Endothelial cell of umbilical vein (primary cell): ENCODE measurements at regions of chr2 and their contacts with region 1.

Region 1: GRCh38 chr2:68594674-68595492 is 48.5 kb upstream of the PROKR1 start:
- DNase-seq: peak; percentile 63
- H3K4me3 ChIP-seq: no peak overlapping the region
- H3K27ac ChIP-seq: no peak overlapping the region
- H3K4me1 ChIP-seq: no peaks in the 10 kb centered on the region
- H3K27me3 ChIP-seq: peaks cover 0 to 4% of the 10 kb centered on the region in 2 experiments
- CTCF ChIP-seq: peak; percentile 75 to 77
- POLR2A ChIP-seq: no peak

Region 2: GRCh38 chr2:68499133-68499532 is 95.8 kb before region 1 on chr2:
- CTCF ChIA-PET with region 1: interaction called, 12 read pairs
- POLR2A ChIA-PET with region 1: no interaction called
- dilution Hi-C with region 1: no loop called
- intact Hi-C with region 1: no loop called
- DNase-seq: no peak
- H3K4me3 ChIP-seq: no peak overlapping the region
- H3K27ac ChIP-seq: no peak overlapping the region
- H3K4me1 ChIP-seq: no peaks in the 10 kb centered on the region
- H3K27me3 ChIP-seq: no peaks in the 10 kb centered on the region
- CTCF ChIP-seq: no peak
- POLR2A ChIP-seq: no peak

Region 3: GRCh38 chr2:68561372-68561771 is 33.5 kb before region 1 on chr2:
- CTCF ChIA-PET with region 1: interaction called, 13 read pairs
- POLR2A ChIA-PET with region 1: no interaction called
- dilution Hi-C with region 1: no loop called
- intact Hi-C with region 1: no loop called
- DNase-seq: peak; percentile 52
- H3K4me3 ChIP-seq: no peak overlapping the region
- H3K27ac ChIP-seq: no peak overlapping the region
- H3K4me1 ChIP-seq: peaks cover 17% of the 10 kb centered on the region
- H3K27me3 ChIP-seq: peaks cover 13 to 44% of the 10 kb centered on the region in 2 experiments
- CTCF ChIP-seq: no peak
- POLR2A ChIP-seq: no peak

Region 4: GRCh38 chr2:68646302-68646701 is 51.4 kb after region 1 on chr2:
- CTCF ChIA-PET with region 1: interaction called, 12 read pairs
- POLR2A ChIA-PET with region 1: no interaction called
- dilution Hi-C with region 1: no loop called
- intact Hi-C with region 1: no loop called
- DNase-seq: no peak
- H3K4me3 ChIP-seq: no peak overlapping the region
- H3K27ac ChIP-seq: no peak overlapping the region
- H3K4me1 ChIP-seq: peaks cover 4% of the 10 kb centered on the region
- H3K27me3 ChIP-seq: peaks cover 53 to 76% of the 10 kb centered on the region in 2 experiments
- CTCF ChIP-seq: no peak
- POLR2A ChIP-seq: no peak